ENCODE measurements at regions of chr7 and their contacts with region 1.

Region 1: GRCh38 chr7:131493581-131493980 is 62.8 kb downstream of the PODXL start:
- DNase-seq: no peak
- H3K4me3 ChIP-seq: no peak overlapping the region
- H3K27ac ChIP-seq: no peak overlapping the region
- H3K4me1 ChIP-seq: peaks cover 0 to 5% (median 0%) of the 10 kb centered on the region in 4 experiments; a peak in 1 of 7 replicates
- H3K27me3 ChIP-seq: no peaks in the 10 kb centered on the region
- CTCF ChIP-seq: no peak
- EP300 ChIP-seq: no peak
- POLR2A ChIP-seq: peak; percentile 20 to 36; a peak in 1 of 3 replicates
- RAD21 ChIP-seq: no peak

Region 2: DNA sequence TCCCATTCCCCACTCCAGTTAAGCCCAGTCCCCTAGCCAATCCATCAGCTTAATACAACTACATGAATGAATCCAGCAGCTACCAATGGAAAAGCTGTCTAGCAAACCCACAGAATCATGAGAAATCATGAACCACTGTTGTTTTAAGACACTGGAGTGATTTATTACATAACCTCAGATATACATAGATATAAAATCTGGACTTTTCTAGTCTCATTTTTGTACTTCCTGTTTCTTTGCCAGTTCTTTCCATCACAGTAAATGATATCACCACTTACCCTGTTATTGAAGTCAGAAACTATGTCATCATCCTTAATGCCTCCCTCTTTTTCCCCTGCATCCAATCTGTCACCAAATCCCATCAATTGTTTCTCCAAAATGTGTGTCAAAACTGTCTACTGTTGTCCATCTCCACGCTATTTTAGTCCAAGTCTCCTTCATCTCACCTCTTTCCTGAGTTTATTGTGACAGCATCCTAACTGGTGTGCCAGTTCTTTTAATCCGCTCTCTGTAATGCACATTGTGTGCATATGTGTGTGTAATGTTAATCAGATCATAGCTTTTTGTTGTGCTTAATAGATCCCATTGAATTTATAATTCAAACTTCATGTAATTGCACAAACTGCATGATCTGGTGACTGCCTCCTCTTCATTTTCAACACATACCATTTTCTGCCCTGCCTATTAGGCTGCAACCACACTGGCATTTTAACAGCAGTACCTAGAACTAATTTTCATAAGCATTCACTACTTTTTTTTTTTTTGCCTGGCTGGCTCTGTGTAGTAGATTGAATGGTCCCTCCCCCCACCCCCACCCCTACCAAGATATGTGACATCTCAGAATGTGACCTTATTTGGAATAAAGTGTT is 109.9 kb before region 1 on chr7:
- CTCF ChIA-PET with region 1: no interaction called
- POLR2A ChIA-PET with region 1: no interaction called
- DNase-seq: no peak
- H3K4me3 ChIP-seq: no peak overlapping the region
- H3K27ac ChIP-seq: no peak overlapping the region
- H3K4me1 ChIP-seq: peaks cover 0 to 5% (median 2%) of the 10 kb centered on the region in 4 experiments; a peak in 2 of 7 replicates
- H3K27me3 ChIP-seq: no peaks in the 10 kb centered on the region
- CTCF ChIP-seq: no peak
- EP300 ChIP-seq: no peak
- POLR2A ChIP-seq: no peak
- RAD21 ChIP-seq: no peak

Region 3: DNA sequence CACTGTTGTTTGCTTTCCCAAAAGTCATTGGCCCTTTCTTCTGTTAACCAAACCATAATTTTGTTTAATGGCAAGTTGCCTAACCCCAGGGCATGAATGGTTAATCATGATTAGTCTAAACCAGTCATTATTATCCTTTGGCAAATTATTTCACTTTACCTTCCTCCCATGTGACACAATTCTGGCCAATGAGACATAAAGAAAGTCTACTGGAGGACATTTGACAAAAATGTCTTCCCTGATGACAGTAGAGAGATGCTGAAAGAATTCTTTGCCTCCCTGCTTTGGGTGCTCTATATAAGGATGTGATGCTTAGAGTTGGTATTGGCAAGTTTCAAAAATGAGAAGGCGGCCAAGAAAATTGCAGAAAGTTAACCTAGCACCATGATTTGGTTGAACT is 39.0 kb before region 1 on chr7:
- CTCF ChIA-PET with region 1: no interaction called
- POLR2A ChIA-PET with region 1: no interaction called
- DNase-seq: no peak
- H3K4me3 ChIP-seq: no peak overlapping the region
- H3K27ac ChIP-seq: no peak overlapping the region
- H3K4me1 ChIP-seq: no peaks in the 10 kb centered on the region
- H3K27me3 ChIP-seq: no peaks in the 10 kb centered on the region
- CTCF ChIP-seq: no peak
- EP300 ChIP-seq: no peak
- POLR2A ChIP-seq: no peak
- RAD21 ChIP-seq: no peak

Region 4: DNA sequence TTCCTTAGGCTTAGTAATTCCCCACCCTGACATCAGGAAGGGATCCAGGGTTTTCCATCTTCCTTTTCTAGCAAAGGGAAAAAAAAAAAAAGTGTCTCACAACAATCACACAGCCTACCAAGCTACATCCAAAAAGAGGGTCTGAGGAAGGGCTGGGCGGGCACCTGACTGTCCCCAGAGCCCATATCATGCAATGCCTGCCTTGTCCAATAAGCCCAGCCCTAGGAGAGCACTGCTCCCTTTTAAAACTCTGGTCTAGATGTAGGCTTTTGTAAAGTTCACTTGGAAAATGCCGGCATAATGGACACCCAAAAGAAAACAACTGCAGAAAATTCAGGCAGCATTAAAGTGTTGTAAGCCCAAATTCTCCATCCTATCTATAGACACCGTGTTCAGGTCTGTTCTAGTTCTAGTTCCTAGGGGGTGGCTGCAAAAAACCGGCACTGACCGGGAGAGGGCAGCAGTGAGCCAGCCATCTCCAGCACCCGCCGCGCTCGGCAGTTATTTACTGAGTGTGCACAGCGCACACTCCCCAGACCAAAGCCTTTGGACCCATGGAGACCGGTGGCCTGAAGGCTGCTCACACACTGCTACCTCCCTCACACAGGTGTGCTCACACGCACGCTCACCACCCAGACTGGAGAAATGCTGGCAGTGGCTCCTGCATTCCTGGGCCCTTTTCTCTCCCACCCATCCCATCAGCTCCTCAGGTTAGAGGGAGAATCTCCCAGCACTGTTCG is 14.2 kb after region 1 on chr7:
- CTCF ChIA-PET with region 1: interaction called, 22 read pairs
- POLR2A ChIA-PET with region 1: interaction called, 12 read pairs
- DNase-seq: peak in 1 of 2 experiments; percentile 76
- H3K4me3 ChIP-seq: no peak overlapping the region
- H3K27ac ChIP-seq: peak overlapping the region; percentile 50; the same call in 1 of the 2 replicates
- H3K4me1 ChIP-seq: peaks cover 0 to 7% (median 3%) of the 10 kb centered on the region in 4 experiments; a peak in 4 of 7 replicates
- H3K27me3 ChIP-seq: no peaks in the 10 kb centered on the region
- CTCF ChIP-seq: peak; percentile 50 to 61 (median 60); a peak in 3 of 4 replicates
- EP300 ChIP-seq: no peak
- POLR2A ChIP-seq: peak; percentile 13 to 38; a peak in 2 of 3 replicates
- RAD21 ChIP-seq: peak; percentile 56 to 59

Region 5: GRCh38 chr7:131803861-131804260 is 310.3 kb after region 1 on chr7:
- CTCF ChIA-PET with region 1: no interaction called
- POLR2A ChIA-PET with region 1: no interaction called
- DNase-seq: no peak
- H3K4me3 ChIP-seq: no peak overlapping the region
- H3K27ac ChIP-seq: no peak overlapping the region
- H3K4me1 ChIP-seq: peaks cover 0 to 8% (median 5%) of the 10 kb centered on the region in 4 experiments; a peak in 4 of 7 replicates
- H3K27me3 ChIP-seq: no peaks in the 10 kb centered on the region; a peak in 1 of 7 replicates
- CTCF ChIP-seq: no peak
- EP300 ChIP-seq: no peak
- POLR2A ChIP-seq: no peak
- RAD21 ChIP-seq: no peak

Measured in H1 (cell line).